ENCODE measurements at regions of chr11 and their contacts with region 1.

Region 1: DNA sequence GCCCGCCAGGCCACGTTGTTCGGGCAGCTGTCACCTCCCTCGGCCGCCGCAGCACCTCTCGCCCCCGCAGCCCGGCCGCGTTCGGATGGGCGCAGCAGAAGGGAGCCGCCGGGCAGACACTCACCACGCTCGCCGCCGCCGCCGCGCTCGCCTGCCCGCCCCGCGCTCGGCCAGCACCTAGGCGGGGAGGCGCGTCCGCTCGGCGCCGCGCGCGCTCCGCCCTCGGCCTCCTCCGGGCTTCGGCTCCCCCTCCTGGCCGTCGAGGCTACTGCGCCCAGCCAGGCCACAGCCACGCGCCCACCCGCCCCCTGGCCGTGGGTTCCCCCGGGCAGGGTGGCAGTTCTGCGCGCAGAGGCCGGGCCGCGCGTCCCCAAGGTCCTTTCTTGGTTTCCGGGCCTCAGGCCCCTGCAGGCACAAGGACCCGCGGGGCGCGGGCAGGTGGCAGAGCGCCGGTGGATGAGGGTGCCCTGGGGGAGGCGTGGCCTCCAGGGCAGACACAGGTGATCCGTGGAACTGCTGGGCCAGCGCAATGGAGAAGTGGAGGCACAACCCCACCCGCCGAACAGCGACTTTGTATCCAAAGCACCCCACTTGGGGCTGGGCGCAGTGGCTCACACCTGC is at the start of gene SLC25A22:
- DNase-seq: no peak
- H3K4me3 ChIP-seq: peak within 1 kb of the TSS; percentile 49 to 65 (median 56)
- H3K27ac ChIP-seq: peak within 1 kb of the TSS; percentile 84 to 93 (median 90)
- H3K4me1 ChIP-seq: peaks cover 0 to 38% (median 31%) of the 10 kb centered on the region in 4 donors
- H3K27me3 ChIP-seq: no peaks in the 10 kb centered on the region
- CTCF ChIP-seq: peak; percentile 42 to 82 (median 66)
- EP300 ChIP-seq: no peak
- POLR2A ChIP-seq: no peak
- total RNA-seq, gene SLC25A22: 3.8 to 7.2 (median 5.4) TPM

Region 2: GRCh38 chr11:355581-356458 is 442.4 kb before region 1 on chr11:
- intact Hi-C with region 1: no loop called
- DNase-seq: peak; percentile 99
- H3K4me3 ChIP-seq: peak overlapping the region; percentile 33 to 48 (median 46)
- H3K27ac ChIP-seq: peak overlapping the region; percentile 98 to 100 (median 100)
- H3K4me1 ChIP-seq: peaks cover 0 to 45% (median 37%) of the 10 kb centered on the region in 4 donors
- H3K27me3 ChIP-seq: peaks cover 0 to 16% (median 4%) of the 10 kb centered on the region in 3 donors
- CTCF ChIP-seq: no peak
- EP300 ChIP-seq: peak in 3 of 4 donors; percentile 70 to 75 (median 75)
- POLR2A ChIP-seq: peak; percentile 19 to 44

Region 3: DNA sequence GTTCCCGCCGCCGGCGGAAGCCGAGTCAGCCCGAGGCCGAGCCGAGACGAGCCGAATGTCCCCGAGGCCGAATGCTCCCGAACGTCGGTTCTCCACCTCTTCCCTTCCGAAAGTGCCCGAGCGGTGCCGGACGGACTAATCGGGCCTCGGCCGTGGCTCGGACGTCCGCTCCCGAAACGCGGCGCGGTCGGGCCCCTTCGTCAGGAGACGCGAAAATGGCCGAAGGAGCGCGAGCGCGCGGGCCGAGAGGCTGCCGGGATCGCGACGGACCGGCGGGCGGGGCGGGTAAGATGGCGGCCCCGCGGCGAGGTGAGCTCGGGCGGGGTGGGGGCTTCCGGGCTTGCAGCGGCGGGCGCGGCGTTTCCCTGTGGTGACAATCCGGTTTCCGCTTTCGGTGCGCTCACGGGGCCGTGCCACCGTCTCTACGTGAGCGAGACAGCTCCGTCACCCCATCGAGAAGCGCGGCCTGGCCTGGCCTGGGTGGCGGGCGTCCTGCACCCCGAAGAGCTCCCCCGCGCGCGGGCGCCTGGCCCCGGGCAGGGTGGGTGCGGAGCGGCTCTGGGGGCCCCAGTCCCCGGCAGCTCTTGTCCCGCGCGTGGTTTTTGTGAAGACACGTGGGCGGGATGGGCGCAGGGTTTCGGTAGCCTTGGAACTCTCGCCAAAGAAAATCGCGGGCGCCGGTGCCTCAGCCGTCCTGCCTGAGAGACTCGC is 102.5 kb before region 1 on chr11 and contains the start of gene TMEM80:
- intact Hi-C with region 1: loop called (anchors 5 kb)
- DNase-seq: peak; percentile 100
- H3K4me3 ChIP-seq: peak within 1 kb of the TSS; percentile 78 to 98 (median 92)
- H3K27ac ChIP-seq: peak within 1 kb of the TSS; percentile 98 to 100 (median 99)
- H3K4me1 ChIP-seq: peaks cover 0 to 46% (median 41%) of the 10 kb centered on the region in 4 donors
- H3K27me3 ChIP-seq: no peaks in the 10 kb centered on the region
- CTCF ChIP-seq: no peak
- EP300 ChIP-seq: no peak
- POLR2A ChIP-seq: peak in 1 of 2 donors; percentile 20
- total RNA-seq, gene TMEM80: 20.9 to 41.5 (median 39.6) TPM

Region 4: DNA sequence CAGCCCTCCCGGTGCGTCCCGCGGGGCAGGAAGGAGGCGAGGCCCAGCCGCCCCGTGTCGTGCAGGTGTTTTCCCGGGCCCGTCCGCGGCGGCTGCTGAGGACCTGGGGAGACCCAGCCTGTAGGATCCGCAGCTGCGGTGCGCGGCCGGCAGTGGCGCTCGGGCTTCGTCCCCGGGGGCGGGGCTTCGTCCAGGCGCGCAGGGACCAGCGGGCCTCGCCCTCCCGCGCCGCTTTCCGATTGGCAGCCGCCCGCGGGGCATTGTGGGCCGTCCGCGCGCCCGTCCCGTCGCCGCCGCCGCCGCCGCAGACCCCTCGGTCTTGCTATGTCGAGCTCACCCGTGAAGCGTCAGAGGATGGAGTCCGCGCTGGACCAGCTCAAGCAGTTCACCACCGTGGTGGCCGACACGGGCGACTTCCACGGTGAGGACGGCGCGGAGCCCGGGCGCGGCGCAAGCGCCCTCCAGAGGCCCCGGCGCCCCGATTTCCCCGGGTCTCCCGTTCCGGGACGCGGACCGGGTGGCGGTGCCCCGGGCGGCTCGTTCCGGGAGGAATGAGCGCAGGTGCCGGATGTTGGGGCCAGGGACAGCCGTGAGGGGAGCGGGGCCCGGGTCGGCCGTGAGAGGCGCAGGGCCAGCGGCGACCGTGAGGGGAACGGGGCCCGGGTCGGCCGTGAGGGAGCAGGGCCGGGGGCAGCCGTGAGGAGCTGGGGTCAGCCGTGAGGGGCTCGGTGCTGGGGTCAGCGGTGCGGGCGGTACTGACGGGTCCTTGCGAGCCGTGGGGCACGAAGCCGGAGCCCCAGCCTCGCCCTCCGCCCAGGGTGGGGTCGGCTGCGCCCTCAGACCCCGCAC is 50.8 kb before region 1 on chr11 and contains the start of gene TALDO1:
- intact Hi-C with region 1: loop called (anchors 5 kb)
- DNase-seq: peak; percentile 95
- H3K4me3 ChIP-seq: peak within 1 kb of the TSS; percentile 76 to 99 (median 97)
- H3K27ac ChIP-seq: peak within 1 kb of the TSS; percentile 82 to 89 (median 87)
- H3K4me1 ChIP-seq: peaks cover 0 to 30% (median 22%) of the 10 kb centered on the region in 4 donors
- H3K27me3 ChIP-seq: no peaks in the 10 kb centered on the region
- CTCF ChIP-seq: peak in 1 of 4 experiments; percentile 20
- EP300 ChIP-seq: no peak
- POLR2A ChIP-seq: peak; percentile 16 to 41
- total RNA-seq, gene TALDO1: 94.6 to 133 (median 108) TPM

Region 5: DNA sequence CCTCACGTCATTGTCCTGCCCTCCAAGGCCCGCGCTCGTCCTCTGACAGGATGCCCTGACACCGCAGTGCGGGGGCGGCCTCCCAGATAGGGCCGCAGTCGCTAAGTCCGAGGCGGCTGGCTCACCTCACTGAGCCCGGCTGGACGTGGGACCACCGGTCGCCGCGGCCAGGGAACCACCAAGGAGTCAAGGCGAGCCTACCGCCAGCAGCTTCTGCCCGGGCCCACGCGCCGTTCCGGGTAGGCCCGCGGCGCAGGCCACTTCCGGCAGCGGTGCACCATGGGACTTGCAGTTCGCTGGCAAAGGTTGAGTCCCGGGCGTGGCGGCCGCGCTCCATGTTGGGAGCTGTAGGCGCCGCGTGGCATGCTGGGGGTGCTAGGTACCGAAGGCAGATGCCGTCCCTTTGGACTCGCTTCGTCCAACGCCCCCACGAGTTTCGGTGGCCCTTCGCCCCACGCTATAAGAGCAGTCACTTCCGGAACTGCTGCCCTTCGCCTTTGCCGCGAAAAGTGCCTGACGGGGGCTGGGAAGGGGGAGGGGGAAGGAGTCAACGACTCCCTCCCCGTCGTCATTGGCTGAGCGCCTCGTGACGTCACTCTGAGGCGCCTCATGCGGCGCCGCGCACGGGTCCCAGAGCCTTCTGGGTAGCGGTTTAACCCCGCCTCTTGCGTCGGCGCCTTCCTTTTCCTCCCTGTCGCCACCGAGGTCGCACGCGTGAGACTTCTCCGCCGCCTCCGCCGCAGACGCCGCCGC is 11.3 kb after region 1 on chr11 and contains the start of gene RPLP2:
- intact Hi-C with region 1: loop called (anchors 1 kb)
- DNase-seq: peak; percentile 99
- H3K4me3 ChIP-seq: peak within 1 kb of the TSS; percentile 73 to 99 (median 93)
- H3K27ac ChIP-seq: peak within 1 kb of the TSS; percentile 91 to 97 (median 94)
- H3K4me1 ChIP-seq: peaks cover 0 to 39% (median 35%) of the 10 kb centered on the region in 4 donors
- H3K27me3 ChIP-seq: no peaks in the 10 kb centered on the region
- CTCF ChIP-seq: no peak
- EP300 ChIP-seq: peak in 2 of 4 donors; percentile 10 to 21
- POLR2A ChIP-seq: peak; percentile 90 to 91
- total RNA-seq, gene RPLP2: 405 to 632 (median 412) TPM

Region 6: DNA sequence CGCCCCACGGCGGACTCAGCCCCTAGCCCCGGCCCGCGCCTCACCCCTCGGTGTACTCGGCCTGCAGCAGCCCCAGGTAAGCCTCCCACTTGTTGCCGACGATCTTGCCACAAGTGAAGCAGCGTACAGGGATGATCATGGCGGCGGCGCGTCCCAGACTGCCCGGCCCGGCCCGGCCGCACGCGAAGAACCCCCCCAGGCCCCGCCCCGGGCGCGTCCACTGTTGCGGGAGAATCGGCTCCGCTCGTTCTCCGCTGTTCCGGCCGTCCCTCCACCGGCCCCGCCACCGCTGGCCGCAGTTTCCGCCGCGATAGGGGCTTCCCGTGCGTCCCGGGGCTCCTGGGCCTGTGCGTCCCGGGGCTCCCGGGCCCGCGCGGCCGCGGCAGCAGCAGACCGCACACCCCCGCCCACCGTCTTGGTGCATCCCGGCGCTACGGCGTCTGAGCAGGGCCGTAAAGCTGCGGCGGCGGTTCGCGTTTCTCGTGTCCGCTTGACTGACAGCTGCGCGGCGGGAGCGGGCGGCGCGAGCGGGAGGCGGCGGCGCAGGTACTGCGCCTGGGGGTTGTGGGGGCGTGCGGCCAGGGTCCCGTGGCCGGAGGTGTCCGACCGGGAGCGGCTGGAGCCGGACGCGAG is 44.3 kb after region 1 on chr11 and contains the starts of genes POLR2L and TSPAN4:
- intact Hi-C with region 1: loop called (anchors 2 kb)
- DNase-seq: peak; percentile 96
- H3K4me3 ChIP-seq: peak within 1 kb of the TSS; percentile 80 to 100 (median 86)
- H3K27ac ChIP-seq: peak within 1 kb of the TSS; percentile 90 to 96 (median 93)
- H3K4me1 ChIP-seq: peaks cover 0 to 76% (median 58%) of the 10 kb centered on the region in 4 donors
- H3K27me3 ChIP-seq: no peaks in the 10 kb centered on the region
- CTCF ChIP-seq: no peak
- EP300 ChIP-seq: no peak
- POLR2A ChIP-seq: peak; percentile 68 to 70
- total RNA-seq, gene POLR2L: 34.9 to 75.3 (median 52.0) TPM
- total RNA-seq, gene TSPAN4: 79.2 to 92.7 (median 82.9) TPM

Measured in sigmoid colon (tissue), 7 donors.